HCT116 (cell line): ENCODE measurements at regions of chr5 and their contacts with region 1.

Region 1: DNA sequence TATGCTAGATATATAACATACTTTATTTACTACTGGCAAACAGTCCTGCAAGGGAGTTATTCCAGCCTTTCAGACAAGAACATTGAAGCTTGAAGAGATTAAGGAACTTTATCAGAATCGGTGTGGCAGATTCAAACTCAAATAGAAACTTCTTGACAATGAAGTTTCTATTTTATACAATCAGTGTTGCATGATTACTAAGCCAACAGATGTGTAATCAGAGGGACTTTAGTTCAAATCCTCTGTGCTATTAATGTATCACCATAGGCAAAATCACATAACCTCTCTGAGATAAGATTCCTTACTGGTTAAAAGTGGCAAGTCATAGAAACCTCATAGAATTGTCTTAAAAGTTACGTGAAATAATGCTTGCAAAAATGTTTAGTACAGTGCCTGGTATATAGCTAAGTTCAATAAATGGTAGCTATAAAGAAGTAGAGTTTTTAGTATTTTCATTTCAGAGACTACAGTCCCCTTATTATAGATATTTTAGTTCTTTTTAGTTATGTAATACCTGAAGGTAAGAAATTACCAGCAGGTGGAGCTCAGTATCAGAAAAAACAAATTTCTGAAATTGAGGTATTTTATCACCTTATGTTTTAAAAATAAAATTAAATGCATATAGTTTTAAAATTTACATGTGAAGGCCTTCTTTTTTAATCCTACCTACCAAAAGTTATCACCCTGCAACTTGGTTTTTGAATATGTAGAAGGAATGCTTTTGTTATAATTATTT is 172.1 kb downstream of the FER start:
- DNase-seq: no peak
- ATAC-seq: no peak
- H3K4me3 ChIP-seq: no peak overlapping the region
- H3K27ac ChIP-seq: no peak overlapping the region
- H3K4me1 ChIP-seq: no peaks in the 10 kb centered on the region
- H3K27me3 ChIP-seq: no peaks in the 10 kb centered on the region
- CTCF ChIP-seq: peak; percentile 12 to 49 (median 42); a peak in 3 of 6 replicates
- POLR2A ChIP-seq: no peak
- RAD21 ChIP-seq: peak; percentile 66

Region 2: DNA sequence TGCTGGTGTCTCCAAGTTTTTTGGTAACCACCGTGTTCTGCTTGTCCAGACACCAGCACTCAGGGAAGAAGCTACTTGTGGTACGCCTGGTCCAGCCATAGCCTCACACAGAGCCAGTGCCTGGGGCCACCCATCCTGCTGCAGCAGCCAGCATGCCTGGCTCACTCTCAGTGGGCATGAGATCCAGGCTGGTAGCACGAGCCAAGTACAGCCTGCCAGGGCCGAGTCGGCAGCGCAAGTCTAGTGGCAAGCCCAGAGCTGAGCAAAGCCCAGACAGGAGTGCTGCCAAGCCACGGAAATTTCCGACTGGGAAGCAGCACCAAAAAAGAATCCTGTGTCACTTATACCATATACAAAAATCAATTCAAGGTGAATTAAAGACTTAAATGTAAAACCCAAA is 501.6 kb before region 1 on chr5:
- CTCF ChIA-PET with region 1: no interaction called
- POLR2A ChIA-PET with region 1: no interaction called
- RAD21 ChIA-PET with region 1: no interaction called
- intact Hi-C with region 1: no loop called
- DNase-seq: no peak
- ATAC-seq: no peak
- H3K4me3 ChIP-seq: no peak overlapping the region
- H3K27ac ChIP-seq: no peak overlapping the region
- H3K4me1 ChIP-seq: no peaks in the 10 kb centered on the region
- H3K27me3 ChIP-seq: no peaks in the 10 kb centered on the region
- CTCF ChIP-seq: no peak
- POLR2A ChIP-seq: no peak
- RAD21 ChIP-seq: no peak

Region 3: GRCh38 chr5:108642167-108642906 is 277.4 kb before region 1 on chr5:
- CTCF ChIA-PET with region 1: no interaction called
- POLR2A ChIA-PET with region 1: no interaction called
- RAD21 ChIA-PET with region 1: no interaction called
- intact Hi-C with region 1: loop called (anchors 5 kb)
- DNase-seq: peak; percentile 69
- ATAC-seq: peak; percentile 100
- H3K4me3 ChIP-seq: peak overlapping the region; percentile 20 to 36; a peak in 3 of 4 replicates
- H3K27ac ChIP-seq: no peak overlapping the region
- H3K4me1 ChIP-seq: peaks cover 0 to 9% of the 10 kb centered on the region in 2 experiments; a peak in 2 of 4 replicates
- H3K27me3 ChIP-seq: no peaks in the 10 kb centered on the region
- CTCF ChIP-seq: peak; percentile 74 to 92 (median 91)
- POLR2A ChIP-seq: no peak
- RAD21 ChIP-seq: peak; percentile 92

Region 4: DNA sequence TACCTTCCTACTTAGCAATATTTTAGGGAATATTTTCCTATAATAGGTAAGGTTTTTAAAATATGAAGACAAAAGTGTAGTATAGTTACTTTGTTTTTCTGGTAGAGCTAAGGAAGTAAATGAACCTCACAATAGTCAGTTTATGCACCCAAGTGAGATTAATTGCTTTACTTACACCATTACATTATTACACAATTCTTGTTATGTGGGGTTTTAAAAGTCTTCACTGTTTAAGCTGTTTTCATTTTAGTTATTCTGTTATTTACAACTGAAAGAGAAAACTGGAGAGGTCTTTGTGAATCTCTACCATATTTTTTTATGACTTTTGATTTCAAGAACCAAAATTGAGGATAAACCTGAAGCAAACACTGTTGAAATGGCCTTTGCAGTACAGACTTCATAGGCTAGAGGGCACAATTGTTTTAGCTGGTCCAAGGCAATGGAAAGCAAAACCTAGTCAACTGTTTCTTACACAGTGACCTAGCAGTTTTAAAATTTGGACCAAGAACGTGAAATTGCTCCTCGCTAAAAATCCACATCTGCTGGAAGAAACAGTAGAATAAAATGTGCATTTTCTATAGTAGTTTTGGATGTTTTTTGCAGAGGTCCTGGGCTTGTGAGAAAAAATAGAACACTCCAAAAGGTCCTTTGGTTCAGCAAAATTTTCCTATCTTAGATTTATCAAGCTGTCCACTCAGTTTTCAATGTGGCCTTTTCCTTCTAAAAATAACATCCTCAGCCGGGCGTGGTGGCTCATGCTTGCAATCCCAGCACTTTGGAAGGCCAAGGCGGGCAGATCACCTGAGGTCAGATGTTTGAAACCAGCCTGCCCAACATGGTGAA is 238.5 kb before region 1 on chr5:
- CTCF ChIA-PET with region 1: no interaction called
- POLR2A ChIA-PET with region 1: no interaction called
- RAD21 ChIA-PET with region 1: no interaction called
- intact Hi-C with region 1: loop called (anchors 5 kb)
- DNase-seq: peak; percentile 51
- ATAC-seq: peak; percentile 97
- H3K4me3 ChIP-seq: no peak overlapping the region
- H3K27ac ChIP-seq: peak overlapping the region; percentile 12; the same call in 1 of the 2 replicates
- H3K4me1 ChIP-seq: peaks cover 0 to 4% of the 10 kb centered on the region in 2 experiments; a peak in 2 of 4 replicates
- H3K27me3 ChIP-seq: no peaks in the 10 kb centered on the region
- CTCF ChIP-seq: peak; percentile 52 to 88 (median 71); a peak in 5 of 6 replicates
- POLR2A ChIP-seq: no peak
- RAD21 ChIP-seq: peak; percentile 89

Region 5: GRCh38 chr5:109161914-109162683 is 242.3 kb after region 1 on chr5:
- CTCF ChIA-PET with region 1: no interaction called
- POLR2A ChIA-PET with region 1: no interaction called
- RAD21 ChIA-PET with region 1: no interaction called
- intact Hi-C with region 1: no loop called
- DNase-seq: no peak
- ATAC-seq: no peak
- H3K4me3 ChIP-seq: no peak overlapping the region
- H3K27ac ChIP-seq: no peak overlapping the region
- H3K4me1 ChIP-seq: no peaks in the 10 kb centered on the region
- H3K27me3 ChIP-seq: no peaks in the 10 kb centered on the region
- CTCF ChIP-seq: no peak
- POLR2A ChIP-seq: no peak
- RAD21 ChIP-seq: no peak

Region 6: GRCh38 chr5:109439590-109439989 is 519.8 kb after region 1 on chr5:
- CTCF ChIA-PET with region 1: no interaction called
- POLR2A ChIA-PET with region 1: no interaction called
- RAD21 ChIA-PET with region 1: no interaction called
- intact Hi-C with region 1: loop called (anchors 2 kb)
- DNase-seq: no peak
- ATAC-seq: no peak
- H3K4me3 ChIP-seq: no peak overlapping the region
- H3K27ac ChIP-seq: no peak overlapping the region
- H3K4me1 ChIP-seq: no peaks in the 10 kb centered on the region
- H3K27me3 ChIP-seq: no peaks in the 10 kb centered on the region
- CTCF ChIP-seq: no peak
- POLR2A ChIP-seq: no peak
- RAD21 ChIP-seq: no peak

Region 7: DNA sequence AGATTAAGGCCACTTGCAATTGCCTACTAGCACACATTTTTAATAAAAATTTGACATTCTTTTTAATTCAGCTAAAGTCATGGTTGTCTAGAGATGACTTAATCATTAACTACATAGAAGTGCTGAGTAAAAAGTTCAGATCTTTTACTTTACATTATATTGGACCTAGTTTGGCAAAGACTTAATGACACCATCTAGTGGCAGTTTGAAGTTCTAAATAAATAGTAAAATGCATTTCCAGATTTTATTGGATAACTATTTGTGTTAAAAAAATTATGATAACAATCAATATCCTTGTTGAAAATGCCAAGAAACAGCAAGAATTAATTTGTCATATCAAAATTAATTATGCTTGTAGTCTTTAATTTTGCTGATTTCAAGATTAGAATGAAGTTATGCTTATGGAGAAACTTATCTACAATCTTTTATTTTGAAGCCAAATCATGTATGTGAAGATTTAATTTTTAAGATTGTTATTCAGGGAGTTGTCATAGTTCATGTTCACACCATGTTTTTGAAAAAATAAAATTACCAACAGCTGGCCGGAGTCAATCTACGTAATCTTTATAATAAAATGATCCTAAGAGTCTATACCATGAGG is 559.6 kb after region 1 on chr5:
- CTCF ChIA-PET with region 1: interaction called, 3 read pairs
- POLR2A ChIA-PET with region 1: no interaction called
- RAD21 ChIA-PET with region 1: no interaction called
- intact Hi-C with region 1: loop called (anchors 5 kb)
- DNase-seq: no peak
- ATAC-seq: no peak
- H3K4me3 ChIP-seq: no peak overlapping the region
- H3K27ac ChIP-seq: no peak overlapping the region
- H3K4me1 ChIP-seq: no peaks in the 10 kb centered on the region
- H3K27me3 ChIP-seq: no peaks in the 10 kb centered on the region
- CTCF ChIP-seq: peak; percentile 13 to 63 (median 53); a peak in 3 of 6 replicates
- POLR2A ChIP-seq: no peak
- RAD21 ChIP-seq: peak; percentile 68

Region 8: DNA sequence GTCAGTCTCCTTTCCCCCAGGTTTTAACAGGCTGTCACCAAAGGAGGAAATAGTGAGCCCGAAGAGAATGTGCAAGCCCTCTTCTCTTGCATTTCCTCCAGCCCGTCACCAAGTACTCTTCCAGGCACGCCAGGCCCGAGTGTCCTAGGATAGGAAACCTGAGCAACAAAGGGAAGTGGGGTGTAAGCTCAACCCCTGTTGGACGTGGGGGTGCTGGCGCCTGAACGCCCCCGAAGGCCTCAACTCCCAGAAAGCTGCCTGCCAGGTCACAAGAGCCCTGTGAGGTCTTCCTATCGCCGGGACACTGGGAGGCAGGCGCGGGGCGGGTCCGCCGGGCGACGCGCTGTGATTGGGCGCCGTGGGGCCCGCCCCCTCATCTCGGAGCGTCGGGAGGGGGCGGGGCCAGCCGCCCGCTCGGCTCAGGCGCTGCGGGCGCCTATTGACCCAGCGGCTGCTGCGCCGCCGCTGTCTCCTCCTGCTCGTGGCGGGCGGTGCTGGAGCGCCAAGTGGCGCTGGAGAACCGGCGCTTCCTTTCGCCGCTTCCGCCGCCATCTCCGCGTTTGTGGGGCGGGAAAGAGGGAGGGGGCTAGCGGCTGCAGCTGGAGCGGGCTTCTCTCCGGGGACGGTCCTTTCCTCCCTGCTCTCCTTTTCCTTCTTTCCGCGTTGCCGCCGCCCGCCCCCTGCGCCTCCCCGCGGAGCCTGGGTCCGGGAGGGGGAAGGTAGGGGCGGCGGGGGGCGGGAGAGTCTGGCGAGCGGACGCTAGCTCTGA is 769.4 kb after region 1 on chr5:
- CTCF ChIA-PET with region 1: no interaction called
- POLR2A ChIA-PET with region 1: no interaction called
- RAD21 ChIA-PET with region 1: no interaction called
- intact Hi-C with region 1: loop called (anchors 5 kb)
- DNase-seq: peak; percentile 71
- ATAC-seq: peak; percentile 85
- H3K4me3 ChIP-seq: peak overlapping the region; percentile 67 to 74
- H3K27ac ChIP-seq: peak overlapping the region; percentile 54
- H3K4me1 ChIP-seq: peaks cover 4 to 18% of the 10 kb centered on the region in 2 experiments; a peak in 3 of 4 replicates
- H3K27me3 ChIP-seq: no peaks in the 10 kb centered on the region
- CTCF ChIP-seq: no peak
- POLR2A ChIP-seq: peak; percentile 88
- RAD21 ChIP-seq: 0 out of 2 replicates have a peak, but pooled peaks have one; percentile 10

Region 9: GRCh38 chr5:109844148-109844547 is 924.4 kb after region 1 on chr5:
- CTCF ChIA-PET with region 1: no interaction called
- POLR2A ChIA-PET with region 1: no interaction called
- RAD21 ChIA-PET with region 1: no interaction called
- intact Hi-C with region 1: loop called (anchors 5 kb)
- DNase-seq: no peak
- ATAC-seq: no peak
- H3K4me3 ChIP-seq: no peak overlapping the region
- H3K27ac ChIP-seq: no peak overlapping the region
- H3K4me1 ChIP-seq: no peaks in the 10 kb centered on the region
- H3K27me3 ChIP-seq: no peaks in the 10 kb centered on the region
- CTCF ChIP-seq: peak in 2 of 3 experiments; percentile 28 to 36; a peak in 2 of 6 replicates
- POLR2A ChIP-seq: no peak
- RAD21 ChIP-seq: peak; percentile 37; the same call in 1 of the 2 replicates